ENCODE measurements at regions of chr17 and their contacts with region 1.

Region 1: GRCh38 chr17:17237026-17237799 is at the start of gene FLCN:
- DNase-seq: peak; percentile 81
- H3K4me3 Mint-ChIP-seq: peak within 1 kb of the TSS; percentile 95
- H3K27ac Mint-ChIP-seq: peak within 1 kb of the TSS; percentile 95
- H3K4me1 Mint-ChIP-seq: peaks cover 29% of the 10 kb centered on the region
- H3K27me3 Mint-ChIP-seq: no peaks in the 10 kb centered on the region
- total RNA-seq, gene FLCN: 27.7 and 30.4 TPM in 2 replicates

Region 2: GRCh38 chr17:17075038-17075781 is 162.0 kb before region 1 on chr17:
- intact Hi-C with region 1: no loop called
- DNase-seq: no peak
- H3K4me3 Mint-ChIP-seq: no peak overlapping the region
- H3K27ac Mint-ChIP-seq: no peak overlapping the region
- H3K4me1 Mint-ChIP-seq: peaks cover 35% of the 10 kb centered on the region
- H3K27me3 Mint-ChIP-seq: no peaks in the 10 kb centered on the region

Region 3: GRCh38 chr17:17140590-17140980 is 96.6 kb before region 1 on chr17:
- intact Hi-C with region 1: no loop called
- DNase-seq: no peak
- H3K4me3 Mint-ChIP-seq: no peak overlapping the region
- H3K27ac Mint-ChIP-seq: no peak overlapping the region
- H3K4me1 Mint-ChIP-seq: peaks cover 5% of the 10 kb centered on the region
- H3K27me3 Mint-ChIP-seq: no peaks in the 10 kb centered on the region

Region 4: GRCh38 chr17:17151962-17152361 is 85.3 kb before region 1 on chr17:
- intact Hi-C with region 1: loop called (anchors 5 kb)
- DNase-seq: no peak
- H3K4me3 Mint-ChIP-seq: no peak overlapping the region
- H3K27ac Mint-ChIP-seq: peak overlapping the region; percentile 55
- H3K4me1 Mint-ChIP-seq: peaks cover 41% of the 10 kb centered on the region
- H3K27me3 Mint-ChIP-seq: no peaks in the 10 kb centered on the region

Region 5: DNA sequence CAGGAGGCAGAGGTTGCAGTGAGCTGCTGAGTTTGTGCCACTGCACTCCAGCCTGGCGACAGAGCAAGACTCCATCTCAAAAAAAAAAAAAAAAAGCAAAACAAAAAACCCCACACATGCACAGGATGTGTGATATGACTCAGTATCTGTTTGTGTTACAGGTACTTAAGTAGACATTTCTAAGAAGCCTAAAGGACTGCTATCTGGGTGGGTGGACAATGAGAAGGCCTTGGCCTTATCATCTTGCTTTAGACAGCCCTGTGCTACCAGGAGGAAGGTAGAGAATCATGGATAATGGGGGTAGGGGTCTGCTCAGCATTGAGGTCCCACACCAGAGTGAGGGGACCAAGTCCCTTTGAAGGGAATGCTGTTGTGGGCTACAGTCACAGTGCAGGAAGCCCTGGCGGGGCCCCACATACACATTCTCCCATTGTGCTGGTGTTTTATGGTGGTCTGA is 57.8 kb before region 1 on chr17:
- intact Hi-C with region 1: loop called (anchors 5 kb)
- DNase-seq: peak; percentile 24
- H3K4me3 Mint-ChIP-seq: peak overlapping the region; percentile 72
- H3K27ac Mint-ChIP-seq: peak overlapping the region; percentile 92
- H3K4me1 Mint-ChIP-seq: peaks cover 71% of the 10 kb centered on the region
- H3K27me3 Mint-ChIP-seq: no peaks in the 10 kb centered on the region

Region 6: GRCh38 chr17:17206124-17206912 is 30.9 kb before region 1 on chr17 and contains the start of gene PLD6:
- intact Hi-C with region 1: loop called (anchors 2 kb)
- DNase-seq: peak; percentile 78
- H3K4me3 Mint-ChIP-seq: peak within 1 kb of the TSS; percentile 82
- H3K27ac Mint-ChIP-seq: peak within 1 kb of the TSS; percentile 86
- H3K4me1 Mint-ChIP-seq: peaks cover 9% of the 10 kb centered on the region
- H3K27me3 Mint-ChIP-seq: no peaks in the 10 kb centered on the region
- total RNA-seq, gene PLD6: 8.5 and 9.1 TPM in 2 replicates

Region 7: GRCh38 chr17:17269926-17270773 is 32.9 kb after region 1 on chr17:
- intact Hi-C with region 1: no loop called
- DNase-seq: no peak
- H3K4me3 Mint-ChIP-seq: no peak overlapping the region
- H3K27ac Mint-ChIP-seq: no peak overlapping the region
- H3K4me1 Mint-ChIP-seq: peaks cover 3% of the 10 kb centered on the region
- H3K27me3 Mint-ChIP-seq: no peaks in the 10 kb centered on the region

Region 8: DNA sequence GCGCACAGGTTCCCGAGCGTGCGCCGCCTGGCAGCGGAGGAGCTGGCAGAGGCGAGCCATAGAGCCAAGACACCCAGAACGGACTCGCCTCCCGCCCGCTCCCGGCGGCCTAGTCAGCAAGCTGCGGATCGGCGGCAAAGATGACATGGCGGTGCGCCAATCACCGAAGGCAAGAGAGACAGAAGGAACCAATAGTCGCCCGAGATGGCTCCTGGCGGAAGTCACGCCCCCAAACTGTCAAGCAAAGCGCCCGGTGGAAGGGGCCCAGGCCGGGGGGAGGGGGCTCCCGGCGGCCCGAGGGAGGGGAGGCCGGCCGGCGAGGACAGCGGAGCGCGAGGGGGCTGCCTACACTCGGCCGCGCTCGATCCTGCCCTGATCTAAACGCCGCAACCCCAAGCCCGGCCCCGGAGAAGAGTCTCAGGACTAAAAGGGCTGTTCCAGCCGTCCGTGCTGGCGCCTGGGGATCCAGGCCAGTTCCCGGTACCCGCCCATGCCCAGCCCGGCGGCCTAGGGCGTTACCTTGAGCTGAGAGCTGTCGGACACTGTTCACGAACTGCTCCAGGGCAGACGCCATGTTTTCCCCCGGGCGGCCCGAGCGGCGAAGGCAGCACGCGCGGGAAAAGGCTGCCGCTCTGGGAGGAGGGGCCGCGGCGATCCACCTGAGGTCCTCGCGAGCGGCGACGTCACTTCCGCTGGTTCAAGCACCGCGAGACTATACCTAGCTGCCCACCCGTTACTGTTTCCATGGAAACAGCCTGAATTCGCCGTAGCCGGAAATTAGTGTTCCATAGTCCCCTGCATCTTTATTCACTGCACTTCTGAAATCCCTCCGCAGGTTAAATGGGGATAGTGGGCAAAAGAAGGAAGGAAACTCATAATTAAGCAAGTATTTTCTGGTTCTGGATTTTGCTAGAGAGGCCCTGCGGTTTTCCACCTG is 43.7 kb after region 1 on chr17 and contains the start of gene COPS3:
- intact Hi-C with region 1: loop called (anchors 2 kb)
- DNase-seq: peak; percentile 96
- H3K4me3 Mint-ChIP-seq: peak within 1 kb of the TSS; percentile 90
- H3K27ac Mint-ChIP-seq: peak within 1 kb of the TSS; percentile 94
- H3K4me1 Mint-ChIP-seq: peaks cover 30% of the 10 kb centered on the region
- H3K27me3 Mint-ChIP-seq: no peaks in the 10 kb centered on the region
- total RNA-seq, gene COPS3: 102 and 106 TPM in 2 replicates

Region 9: GRCh38 chr17:17303010-17303846 is 66.0 kb after region 1 on chr17 and contains the start of gene NT5M:
- intact Hi-C with region 1: loop called (anchors 5 kb)
- DNase-seq: peak; percentile 71
- H3K4me3 Mint-ChIP-seq: peak within 1 kb of the TSS; percentile 88
- H3K27ac Mint-ChIP-seq: peak within 1 kb of the TSS; percentile 87
- H3K4me1 Mint-ChIP-seq: peaks cover 38% of the 10 kb centered on the region
- H3K27me3 Mint-ChIP-seq: no peaks in the 10 kb centered on the region
- total RNA-seq, gene NT5M: 8.1 and 9.5 TPM in 2 replicates

Measured in activated T-helper 2 cell treated with anti-CD3 and anti-CD28 coated beads, Interferon-gamma antibody, Interleukin-2, Interleukin-4, amounts not matched to agents 10 μg/mL and 5 μg/mL and 100 μg/mL, durations not matched to agents 14 hours and 24 hours and 36 hours (primary cell).